ENCODE measurements at regions of chr2 and their contacts with region 1.

Region 1: DNA sequence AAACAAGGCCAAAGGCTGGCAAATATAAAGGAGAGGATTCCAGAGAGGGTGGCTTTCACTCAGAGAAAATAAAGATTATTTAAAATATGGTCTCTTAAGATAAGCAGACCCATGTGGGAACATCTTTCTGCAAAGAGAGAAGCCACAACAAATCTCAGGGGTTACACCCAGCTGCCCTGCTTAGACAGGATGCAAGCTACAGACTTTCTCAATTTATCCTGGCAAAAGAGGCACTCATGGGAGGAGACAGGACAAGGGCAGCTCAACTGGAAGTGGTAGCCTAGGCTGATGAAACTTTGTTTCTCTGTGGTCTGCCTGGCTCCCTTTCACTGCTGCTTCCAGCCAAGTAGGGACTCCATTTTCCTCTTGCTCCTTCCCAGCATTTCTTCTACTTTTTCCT is 25.9 kb upstream of the SULT1C4 start:
- DNase-seq: no peak
- ATAC-seq: no peak
- H3K4me3 ChIP-seq: no peak overlapping the region
- H3K27ac ChIP-seq: no peak overlapping the region
- H3K4me1 ChIP-seq: no peaks in the 10 kb centered on the region
- H3K27me3 ChIP-seq: no peaks in the 10 kb centered on the region
- CTCF ChIP-seq: no peak
- POLR2A ChIP-seq: no peak

Region 2: GRCh38 chr2:108583903-108584520 is 232.1 kb after region 1 on chr2:
- intact Hi-C with region 1: loop called (anchors 10 kb)
- DNase-seq: peak; percentile 64 to 81 (median 72)
- ATAC-seq: peak; percentile 86
- H3K4me3 ChIP-seq: no peak overlapping the region
- H3K27ac ChIP-seq: no peak overlapping the region
- H3K4me1 ChIP-seq: peaks cover 27% of the 10 kb centered on the region
- H3K27me3 ChIP-seq: no peaks in the 10 kb centered on the region
- CTCF ChIP-seq: peak; percentile 48 to 85 (median 81)
- POLR2A ChIP-seq: no peak